CD4-positive, alpha-beta memory T cell (primary cell): ENCODE measurements at regions of chr1 and their contacts with region 1.

Region 1: GRCh38 chr1:89987170-89987819 is 7.6 kb upstream of the ZNF326 start:
- DNase-seq: peak; percentile 66 to 70 (median 68)
- H3K4me3 ChIP-seq: no peak overlapping the region
- H3K4me3 Mint-ChIP-seq: no peak overlapping the region
- H3K27ac ChIP-seq: no peak overlapping the region
- H3K27ac Mint-ChIP-seq: no peak overlapping the region
- H3K4me1 ChIP-seq: no peaks in the 10 kb centered on the region
- H3K4me1 Mint-ChIP-seq: no peaks in the 10 kb centered on the region
- H3K27me3 ChIP-seq: no peaks in the 10 kb centered on the region
- H3K27me3 Mint-ChIP-seq: peaks cover 0 to 1% of the 10 kb centered on the region in 2 donors

Region 2: DNA sequence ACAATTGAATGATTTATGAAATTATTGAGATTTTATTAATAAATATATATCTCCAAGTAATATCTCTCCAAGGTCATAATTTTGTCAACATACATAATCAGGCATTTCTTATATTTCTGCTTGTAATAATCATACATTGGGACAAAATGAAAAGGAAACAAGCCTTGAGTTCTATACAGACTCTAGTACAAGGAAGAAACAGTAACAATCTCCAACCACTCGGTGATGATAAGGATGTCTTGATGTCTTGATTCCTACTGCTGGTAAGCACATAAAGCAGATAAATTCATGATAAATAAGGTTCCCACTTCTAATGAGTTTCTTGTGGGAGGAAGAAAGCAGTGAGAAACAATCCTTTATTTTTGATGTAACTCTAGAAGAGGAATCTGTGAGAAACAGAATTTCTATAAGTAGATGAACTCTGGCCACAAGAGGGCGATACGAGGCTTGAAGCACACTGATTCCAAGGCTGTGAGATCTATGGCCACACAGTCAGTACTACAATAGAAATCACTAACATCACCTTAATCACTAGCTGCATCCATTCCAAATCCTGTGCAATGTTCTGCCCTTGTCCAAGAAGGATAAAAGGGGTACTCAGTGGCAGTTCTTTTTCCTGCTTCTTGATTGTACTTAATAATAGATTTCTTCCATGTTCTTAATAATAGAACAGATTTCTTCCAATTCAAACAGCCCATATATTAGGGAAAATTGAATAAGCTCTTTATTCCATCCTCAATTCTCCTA is 504.1 kb before region 1 on chr1:
- CTCF ChIA-PET with region 1: interaction called, 12 read pairs
- POLR2A ChIA-PET with region 1: no interaction called
- intact Hi-C with region 1: loop called (anchors 1 kb)
- DNase-seq: peak; percentile 63 to 79 (median 68)
- H3K4me3 ChIP-seq: no peak overlapping the region
- H3K4me3 Mint-ChIP-seq: no peak overlapping the region
- H3K27ac ChIP-seq: no peak overlapping the region
- H3K27ac Mint-ChIP-seq: no peak overlapping the region
- H3K4me1 ChIP-seq: no peaks in the 10 kb centered on the region
- H3K4me1 Mint-ChIP-seq: peaks cover 0 to 10% (median 10%) of the 10 kb centered on the region in 4 donors
- H3K27me3 ChIP-seq: no peaks in the 10 kb centered on the region
- H3K27me3 Mint-ChIP-seq: no peaks in the 10 kb centered on the region

Region 3: GRCh38 chr1:89780721-89781120 is 206.6 kb before region 1 on chr1:
- CTCF ChIA-PET with region 1: interaction called, 9 read pairs
- POLR2A ChIA-PET with region 1: no interaction called
- intact Hi-C with region 1: loop called (anchors 1 kb)
- DNase-seq: peak; percentile 24 to 47 (median 33)
- H3K4me3 ChIP-seq: no peak overlapping the region
- H3K4me3 Mint-ChIP-seq: peak overlapping the region in 3 of 8 donors; percentile 0 to 67 (median 10)
- H3K27ac ChIP-seq: no peak overlapping the region
- H3K27ac Mint-ChIP-seq: peak overlapping the region in 2 of 7 donors; percentile 20 to 52
- H3K4me1 ChIP-seq: peaks cover 21% of the 10 kb centered on the region
- H3K4me1 Mint-ChIP-seq: peaks cover 19 to 24% (median 22%) of the 10 kb centered on the region in 4 donors
- H3K27me3 ChIP-seq: no peaks in the 10 kb centered on the region
- H3K27me3 Mint-ChIP-seq: no peaks in the 10 kb centered on the region

Region 4: DNA sequence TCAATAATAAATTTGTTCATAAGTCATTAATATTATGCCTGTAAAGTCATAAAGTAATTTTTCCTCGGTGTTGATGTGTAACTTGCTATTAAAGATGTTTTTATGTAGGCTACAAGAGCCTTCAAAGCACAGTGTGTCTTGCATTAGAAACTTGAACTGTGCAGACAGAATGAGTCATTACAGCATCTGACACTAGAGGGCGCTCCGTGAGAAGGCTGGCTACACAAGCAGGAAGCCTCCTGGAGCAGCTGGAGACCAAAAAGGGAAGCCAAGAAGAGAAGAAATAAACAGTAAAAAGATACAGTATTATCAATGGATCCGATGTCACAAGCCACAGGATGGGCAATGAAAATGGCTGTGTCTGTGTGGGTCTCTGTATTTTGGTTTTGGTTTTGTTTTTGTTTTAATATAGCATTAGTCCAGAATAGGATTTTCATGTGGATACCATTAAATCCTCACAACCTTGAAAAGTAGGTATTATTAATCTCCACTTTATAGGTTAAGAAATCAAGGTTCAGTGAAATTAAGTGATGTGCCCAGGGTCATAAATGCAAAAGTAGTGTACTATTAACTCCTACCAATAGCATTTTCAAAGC is 182.6 kb before region 1 on chr1:
- CTCF ChIA-PET with region 1: interaction called, 38 read pairs
- POLR2A ChIA-PET with region 1: no interaction called
- intact Hi-C with region 1: loop called (anchors 1 kb)
- DNase-seq: peak; percentile 73 to 81 (median 77)
- H3K4me3 ChIP-seq: no peak overlapping the region
- H3K4me3 Mint-ChIP-seq: no peak overlapping the region
- H3K27ac ChIP-seq: no peak overlapping the region
- H3K27ac Mint-ChIP-seq: no peak overlapping the region
- H3K4me1 ChIP-seq: peaks cover 4% of the 10 kb centered on the region
- H3K4me1 Mint-ChIP-seq: no peaks in the 10 kb centered on the region
- H3K27me3 ChIP-seq: no peaks in the 10 kb centered on the region
- H3K27me3 Mint-ChIP-seq: peaks cover 0 to 1% of the 10 kb centered on the region in 2 donors

Region 5: GRCh38 chr1:89953072-89953626 is 34.1 kb before region 1 on chr1:
- CTCF ChIA-PET with region 1: no interaction called
- POLR2A ChIA-PET with region 1: no interaction called
- intact Hi-C with region 1: no loop called
- DNase-seq: peak in 3 of 5 donors; percentile 15 to 21 (median 17)
- H3K4me3 ChIP-seq: no peak overlapping the region
- H3K4me3 Mint-ChIP-seq: no peak overlapping the region
- H3K27ac ChIP-seq: no peak overlapping the region
- H3K27ac Mint-ChIP-seq: no peak overlapping the region
- H3K4me1 ChIP-seq: peaks cover 12% of the 10 kb centered on the region
- H3K4me1 Mint-ChIP-seq: peaks cover 16 to 20% (median 17%) of the 10 kb centered on the region in 4 donors
- H3K27me3 ChIP-seq: no peaks in the 10 kb centered on the region
- H3K27me3 Mint-ChIP-seq: peaks cover 0 to 2% of the 10 kb centered on the region in 2 donors

Region 6: DNA sequence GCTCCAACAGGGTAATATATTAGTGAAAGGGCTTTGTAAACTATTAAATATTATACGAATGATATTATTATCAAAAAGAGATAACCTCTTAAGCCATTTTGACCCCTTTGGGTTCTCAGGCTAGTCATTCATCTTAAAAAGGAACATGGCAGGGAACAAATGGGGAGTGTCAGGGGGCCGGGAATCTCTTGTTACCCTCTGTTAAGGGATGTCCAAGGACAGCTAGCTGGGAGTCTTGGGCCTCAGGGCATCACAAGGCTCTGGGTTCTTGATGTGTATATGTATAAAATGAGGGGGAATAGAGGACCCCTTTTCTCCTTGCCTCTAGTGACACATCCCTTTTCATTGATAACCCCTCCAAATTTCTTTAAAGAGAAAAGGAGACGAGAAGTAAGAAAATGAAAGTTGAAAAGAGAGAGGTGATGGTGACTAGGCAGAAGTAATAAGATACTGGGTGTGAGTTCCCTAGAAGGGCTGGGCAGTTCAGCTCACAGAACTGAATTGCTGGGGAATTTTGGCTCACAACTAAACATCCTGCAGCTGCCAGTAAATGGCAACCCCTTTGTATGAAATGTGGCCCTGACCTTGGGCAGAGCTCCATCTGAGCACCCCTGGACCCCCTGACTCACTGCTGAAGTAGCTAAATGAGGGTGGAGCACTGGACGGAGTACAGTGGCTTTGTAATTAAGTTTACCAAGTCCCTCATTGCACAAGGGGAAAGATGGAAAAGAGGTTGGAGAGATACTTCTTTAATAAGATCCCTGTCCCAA is 12.4 kb before region 1 on chr1:
- CTCF ChIA-PET with region 1: interaction called, 15 read pairs
- POLR2A ChIA-PET with region 1: no interaction called
- intact Hi-C with region 1: no loop called
- DNase-seq: no peak
- H3K4me3 ChIP-seq: no peak overlapping the region
- H3K4me3 Mint-ChIP-seq: no peak overlapping the region
- H3K27ac ChIP-seq: no peak overlapping the region
- H3K27ac Mint-ChIP-seq: no peak overlapping the region
- H3K4me1 ChIP-seq: no peaks in the 10 kb centered on the region
- H3K4me1 Mint-ChIP-seq: no peaks in the 10 kb centered on the region
- H3K27me3 ChIP-seq: no peaks in the 10 kb centered on the region
- H3K27me3 Mint-ChIP-seq: no peaks in the 10 kb centered on the region

Region 7: DNA sequence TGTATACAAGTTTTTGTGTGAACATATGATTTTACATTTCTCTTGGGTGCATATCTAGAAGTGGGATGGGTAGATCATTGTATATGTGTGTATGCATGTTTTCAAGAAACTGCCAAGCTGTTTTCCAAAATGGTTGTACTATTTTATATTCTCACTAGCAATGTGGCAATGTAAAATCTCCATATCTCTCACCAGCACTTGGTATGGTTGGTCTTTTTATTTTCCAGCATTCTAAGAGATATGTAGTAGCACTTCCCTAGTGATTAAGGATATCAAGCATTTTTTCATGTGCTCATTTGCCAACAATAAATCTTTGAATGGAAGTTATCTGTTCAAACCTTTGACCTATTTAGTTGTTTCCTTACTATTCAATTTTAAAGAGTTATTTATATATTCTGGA is 318.3 kb after region 1 on chr1:
- CTCF ChIA-PET with region 1: no interaction called
- POLR2A ChIA-PET with region 1: no interaction called
- intact Hi-C with region 1: no loop called
- DNase-seq: no peak
- H3K4me3 ChIP-seq: no peak overlapping the region
- H3K4me3 Mint-ChIP-seq: no peak overlapping the region
- H3K27ac ChIP-seq: no peak overlapping the region
- H3K27ac Mint-ChIP-seq: no peak overlapping the region
- H3K4me1 ChIP-seq: no peaks in the 10 kb centered on the region
- H3K4me1 Mint-ChIP-seq: no peaks in the 10 kb centered on the region
- H3K27me3 ChIP-seq: no peaks in the 10 kb centered on the region
- H3K27me3 Mint-ChIP-seq: peaks cover 1% of the 10 kb centered on the region in 2 donors